ENCODE measurements at regions of chr16 and their contacts with region 1.

Region 1: DNA sequence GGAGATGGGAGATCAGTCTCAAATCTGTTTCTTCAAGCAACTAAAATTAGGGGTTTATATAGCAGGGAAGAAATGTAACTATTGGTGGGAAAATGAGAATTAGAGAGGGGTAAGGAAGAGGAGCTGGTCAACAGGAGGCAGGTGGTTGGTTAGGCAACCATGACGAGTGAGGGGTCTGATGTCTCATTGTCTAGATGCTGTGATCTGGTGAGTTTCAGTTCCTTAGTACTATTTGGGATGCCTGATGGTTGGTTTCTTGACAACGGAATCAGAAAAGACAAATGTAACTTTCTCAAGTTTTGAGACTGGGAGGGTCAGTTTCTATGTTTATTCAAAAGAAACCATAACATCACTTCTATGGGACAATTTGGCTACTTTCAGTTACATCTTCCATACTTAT is 415.3 kb upstream of the C16orf82 start:
- DNase-seq: peak; percentile 94
- H3K4me3 ChIP-seq: peak overlapping the region; percentile 48
- H3K27ac ChIP-seq: peak overlapping the region; percentile 100
- H3K4me1 ChIP-seq: peaks cover 69% of the 10 kb centered on the region
- CTCF ChIP-seq: no peak

Region 2: DNA sequence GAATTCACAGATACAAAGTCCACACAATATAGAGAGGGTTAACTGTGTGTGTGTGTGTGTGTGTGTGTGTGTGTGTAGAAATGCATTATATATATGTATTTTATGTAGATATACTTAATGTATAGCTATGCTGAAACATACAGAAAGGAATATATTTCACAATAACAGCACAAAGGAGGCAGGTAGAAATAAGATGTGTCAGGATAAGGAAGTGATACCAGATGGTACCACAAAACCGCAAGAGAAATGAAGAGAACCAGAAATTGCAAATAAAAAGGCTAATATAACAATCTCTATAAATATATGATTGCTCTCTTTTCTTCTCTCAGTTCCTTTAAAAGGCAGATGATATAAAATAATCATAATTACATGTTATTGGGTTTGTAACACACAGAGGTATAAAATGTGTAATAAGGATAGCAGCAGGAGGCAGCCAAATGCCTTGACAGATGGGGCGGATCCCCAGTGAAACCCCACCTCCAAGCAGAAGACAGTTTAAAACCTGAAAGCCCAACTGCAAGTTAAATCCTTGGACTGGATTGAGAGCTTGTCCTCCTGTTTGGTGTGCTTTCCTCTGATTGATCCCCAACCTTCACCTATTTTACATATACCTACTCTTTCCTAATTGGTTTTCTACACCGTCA is 49.9 kb after region 1 on chr16:
- CTCF ChIA-PET with region 1: no interaction called
- POLR2A ChIA-PET with region 1: no interaction called
- intact Hi-C with region 1: loop called (anchors 1 kb)
- DNase-seq: peak; percentile 84
- H3K4me3 ChIP-seq: peak overlapping the region; percentile 50
- H3K27ac ChIP-seq: peak overlapping the region; percentile 97
- H3K4me1 ChIP-seq: peaks cover 62% of the 10 kb centered on the region
- CTCF ChIP-seq: no peak

Region 3: DNA sequence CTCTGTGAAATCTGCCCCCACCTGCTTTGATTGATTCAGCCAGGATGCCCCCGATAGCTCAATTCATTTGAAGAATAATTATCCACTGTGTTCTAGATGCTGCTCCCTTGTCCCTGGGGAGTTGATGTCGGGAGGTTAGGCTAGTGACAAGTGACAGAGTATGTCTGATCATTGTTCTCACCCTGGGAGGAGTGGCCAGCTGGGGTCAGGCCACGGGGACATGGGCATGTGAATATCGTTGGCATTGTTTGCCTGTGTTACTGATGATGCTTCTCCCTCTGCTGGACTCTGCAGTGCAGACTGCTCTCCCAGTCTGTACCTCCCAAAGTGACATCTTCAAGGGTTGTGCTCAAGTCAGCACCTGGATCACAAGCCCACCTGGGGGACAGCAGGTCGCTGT is 325.4 kb after region 1 on chr16:
- CTCF ChIA-PET with region 1: no interaction called
- POLR2A ChIA-PET with region 1: no interaction called
- intact Hi-C with region 1: no loop called
- DNase-seq: no peak
- H3K4me3 ChIP-seq: no peak overlapping the region
- H3K27ac ChIP-seq: no peak overlapping the region
- H3K4me1 ChIP-seq: no peaks in the 10 kb centered on the region
- CTCF ChIP-seq: no peak

Measured in OCI-LY7 (cell line).